Caco-2 (cell line): ENCODE measurements at regions of chr12 and their contacts with region 1.

Region 1: GRCh38 chr12:103373088-103373523 is 122.7 kb downstream of the C12orf42 start:
- DNase-seq: peak; percentile 55 to 63
- H3K4me3 ChIP-seq: no peak overlapping the region
- H3K4me3 Mint-ChIP-seq: no peak overlapping the region
- H3K27ac Mint-ChIP-seq: no peak overlapping the region
- H3K4me1 ChIP-seq: no peaks in the 10 kb centered on the region
- H3K4me1 Mint-ChIP-seq: no peaks in the 10 kb centered on the region
- H3K27me3 ChIP-seq: no peaks in the 10 kb centered on the region
- H3K27me3 Mint-ChIP-seq: no peaks in the 10 kb centered on the region
- CTCF ChIP-seq: no peak

Region 2: GRCh38 chr12:103246396-103246795 is 126.7 kb before region 1 on chr12:
- CTCF ChIA-PET with region 1: no interaction called
- POLR2A ChIA-PET with region 1: no interaction called
- intact Hi-C with region 1: loop called (anchors 1 kb)
- DNase-seq: no peak
- H3K4me3 ChIP-seq: no peak overlapping the region
- H3K4me3 Mint-ChIP-seq: peak overlapping the region; percentile 27
- H3K27ac Mint-ChIP-seq: no peak overlapping the region
- H3K4me1 ChIP-seq: no peaks in the 10 kb centered on the region
- H3K4me1 Mint-ChIP-seq: peaks cover 11% of the 10 kb centered on the region
- H3K27me3 ChIP-seq: no peaks in the 10 kb centered on the region
- H3K27me3 Mint-ChIP-seq: no peaks in the 10 kb centered on the region
- CTCF ChIP-seq: no peak

Region 3: DNA sequence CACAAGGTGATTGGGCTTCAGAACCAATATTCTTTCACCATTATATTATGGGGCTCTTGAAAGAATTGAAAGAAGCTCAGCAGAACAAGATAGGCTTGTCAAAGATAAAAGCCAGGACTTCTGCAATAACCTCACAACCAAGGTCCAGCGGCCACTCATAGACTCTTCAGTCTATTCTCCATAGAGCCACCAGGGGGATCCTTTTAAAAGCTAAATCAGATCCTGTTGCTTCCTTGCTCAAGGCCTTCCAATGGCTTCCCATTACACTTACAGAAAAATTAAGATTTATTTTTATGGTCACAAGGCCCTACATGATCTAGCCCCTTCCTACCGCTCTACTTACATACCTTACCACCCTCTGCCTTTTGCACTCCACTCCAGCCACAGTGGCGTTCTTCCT is 46.9 kb before region 1 on chr12:
- CTCF ChIA-PET with region 1: no interaction called
- POLR2A ChIA-PET with region 1: no interaction called
- intact Hi-C with region 1: loop called (anchors 1 kb)
- DNase-seq: no peak
- H3K4me3 ChIP-seq: no peak overlapping the region
- H3K4me3 Mint-ChIP-seq: no peak overlapping the region
- H3K27ac Mint-ChIP-seq: no peak overlapping the region
- H3K4me1 ChIP-seq: no peaks in the 10 kb centered on the region
- H3K4me1 Mint-ChIP-seq: peaks cover 4% of the 10 kb centered on the region
- H3K27me3 ChIP-seq: no peaks in the 10 kb centered on the region
- H3K27me3 Mint-ChIP-seq: no peaks in the 10 kb centered on the region
- CTCF ChIP-seq: peak; percentile 8 to 21

Region 4: GRCh38 chr12:103336940-103337339 is 36.2 kb before region 1 on chr12:
- CTCF ChIA-PET with region 1: no interaction called
- POLR2A ChIA-PET with region 1: no interaction called
- intact Hi-C with region 1: no loop called
- DNase-seq: no peak
- H3K4me3 ChIP-seq: no peak overlapping the region
- H3K4me3 Mint-ChIP-seq: no peak overlapping the region
- H3K27ac Mint-ChIP-seq: no peak overlapping the region
- H3K4me1 ChIP-seq: no peaks in the 10 kb centered on the region
- H3K4me1 Mint-ChIP-seq: no peaks in the 10 kb centered on the region
- H3K27me3 ChIP-seq: no peaks in the 10 kb centered on the region
- H3K27me3 Mint-ChIP-seq: no peaks in the 10 kb centered on the region
- CTCF ChIP-seq: no peak